Activated CD8-positive, alpha-beta T cell treated with anti-CD3 and anti-CD28 coated beads, Interleukin-2, amount 10 ng/mL, durations not matched to agents 7 days and 5 days (primary cell): ENCODE measurements at regions of chr3 and their contacts with region 1.

Region 1: DNA sequence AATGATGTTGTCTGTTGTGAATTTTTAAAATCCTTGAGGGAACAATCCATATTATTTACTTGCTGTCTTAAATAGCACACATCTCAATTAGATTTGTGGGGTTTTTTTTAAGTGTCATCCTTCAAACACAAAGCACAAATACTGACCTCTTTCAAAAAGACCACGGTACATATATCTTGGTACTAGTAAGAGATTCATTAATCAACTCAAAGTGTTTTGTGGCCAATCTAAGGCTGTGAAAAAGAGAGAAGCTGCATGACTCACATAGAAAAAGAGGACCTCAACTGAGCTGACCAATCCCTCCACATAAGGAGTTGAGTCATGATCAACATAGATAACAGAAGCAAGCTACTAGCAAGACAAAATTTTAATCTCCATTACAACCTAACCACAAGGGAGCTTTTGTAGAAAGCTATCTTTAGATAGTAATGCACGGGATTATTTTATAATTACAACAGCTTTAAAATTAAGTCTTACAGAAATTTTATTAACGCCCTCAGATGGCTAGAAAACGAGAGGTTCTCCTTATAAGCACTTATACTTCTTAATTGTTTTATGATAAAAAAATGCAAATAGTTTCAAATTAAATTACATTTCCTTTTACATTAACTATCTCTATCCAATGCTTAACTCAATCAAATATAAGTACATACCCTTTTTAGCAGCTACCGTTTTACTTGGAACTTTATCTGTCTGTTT is 60.5 kb downstream of the TOP2B start:
- DNase-seq: no peak
- ATAC-seq: no peak
- H3K4me3 Mint-ChIP-seq: no peak overlapping the region
- H3K27ac Mint-ChIP-seq: no peak overlapping the region
- H3K4me1 Mint-ChIP-seq: peaks cover 5% of the 10 kb centered on the region
- H3K27me3 Mint-ChIP-seq: no peaks in the 10 kb centered on the region

Region 2: GRCh38 chr3:25594007-25594502 is 10.2 kb before region 1 on chr3:
- CTCF ChIA-PET with region 1: interaction called, 23 read pairs
- POLR2A ChIA-PET with region 1: no interaction called
- DNase-seq: peak; percentile 32
- ATAC-seq: peak; percentile 44
- H3K4me3 Mint-ChIP-seq: no peak overlapping the region
- H3K27ac Mint-ChIP-seq: no peak overlapping the region
- H3K4me1 Mint-ChIP-seq: no peaks in the 10 kb centered on the region
- H3K27me3 Mint-ChIP-seq: no peaks in the 10 kb centered on the region

Region 3: GRCh38 chr3:25707268-25707926 is 103.1 kb after region 1 on chr3:
- CTCF ChIA-PET with region 1: no interaction called
- POLR2A ChIA-PET with region 1: no interaction called
- DNase-seq: no peak
- ATAC-seq: no peak
- H3K4me3 Mint-ChIP-seq: no peak overlapping the region
- H3K27ac Mint-ChIP-seq: no peak overlapping the region
- H3K4me1 Mint-ChIP-seq: no peaks in the 10 kb centered on the region
- H3K27me3 Mint-ChIP-seq: peaks cover 14% of the 10 kb centered on the region